Heart right ventricle (tissue), 16 donors: ENCODE measurements at regions of chr17 and their contacts with region 1.

Region 1: GRCh38 chr17:1908699-1909309 is 79.0 kb downstream of the RPA1 start:
- DNase-seq: peak in 1 of 2 donors; percentile 76
- ATAC-seq: peak; percentile 61 to 89 (median 86)
- H3K4me3 ChIP-seq: peak overlapping the region in 8 of 10 donors; percentile 14 to 48 (median 33)
- H3K27ac ChIP-seq: no peak overlapping the region
- H3K4me1 ChIP-seq: peaks cover 3 to 29% (median 13%) of the 10 kb centered on the region in 9 donors
- H3K27me3 ChIP-seq: peaks cover 10 to 82% (median 49%) of the 10 kb centered on the region in 7 donors
- CTCF ChIP-seq: peak; percentile 48 to 89 (median 73)

Region 2: DNA sequence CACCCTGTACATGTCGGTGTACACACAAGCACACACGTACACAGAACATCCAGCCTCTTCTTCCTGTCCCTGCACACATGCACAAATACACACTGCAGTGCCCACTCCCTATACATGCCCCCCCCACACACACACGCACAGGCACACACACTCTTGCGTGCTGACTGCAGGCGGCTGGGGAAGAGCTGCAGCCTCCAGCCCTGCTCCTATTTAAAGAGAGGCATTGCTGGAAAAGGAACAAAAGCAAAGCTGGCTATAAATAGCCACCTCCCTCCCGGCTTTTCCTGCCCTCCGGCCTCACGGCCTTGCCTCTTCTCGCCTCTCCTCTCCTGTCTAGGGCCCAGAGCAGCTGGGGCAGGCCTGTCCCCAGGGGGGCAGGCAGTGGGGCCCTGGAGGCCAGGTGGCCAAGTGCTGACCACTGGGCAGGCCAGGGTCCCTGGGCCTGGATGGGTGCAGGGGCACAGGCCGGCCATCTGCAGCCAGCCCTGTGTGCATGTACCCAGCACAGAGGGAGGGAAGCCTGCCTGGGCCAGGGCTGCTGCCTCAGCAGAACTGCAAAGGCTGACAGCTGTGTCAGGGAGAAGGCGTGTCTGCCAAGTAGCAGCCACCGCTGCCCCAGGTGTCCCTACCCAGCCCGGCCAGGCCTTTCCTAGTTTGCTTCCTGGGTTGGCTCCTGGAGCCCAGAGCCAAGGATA is 90.9 kb after region 1 on chr17:
- intact Hi-C with region 1: no loop called
- DNase-seq: peak; percentile 62 to 72
- ATAC-seq: peak; percentile 68 to 92 (median 87)
- H3K4me3 ChIP-seq: peak overlapping the region in 1 of 10 donors; percentile 15
- H3K27ac ChIP-seq: peak overlapping the region; percentile 70 to 95 (median 86)
- H3K4me1 ChIP-seq: peaks cover 15 to 55% (median 37%) of the 10 kb centered on the region in 9 donors
- H3K27me3 ChIP-seq: peaks cover 0 to 28% (median 0%) of the 10 kb centered on the region in 7 donors
- CTCF ChIP-seq: no peak

Region 3: GRCh38 chr17:2011411-2012371 is 102.9 kb after region 1 on chr17:
- intact Hi-C with region 1: no loop called
- DNase-seq: no peak
- ATAC-seq: peak; percentile 15 to 53 (median 42)
- H3K4me3 ChIP-seq: peak overlapping the region in 1 of 10 donors; percentile 0
- H3K27ac ChIP-seq: peak overlapping the region in 7 of 10 donors; percentile 3 to 53 (median 26)
- H3K4me1 ChIP-seq: peaks cover 0 to 31% (median 12%) of the 10 kb centered on the region in 9 donors
- H3K27me3 ChIP-seq: no peaks in the 10 kb centered on the region
- CTCF ChIP-seq: no peak

Region 4: DNA sequence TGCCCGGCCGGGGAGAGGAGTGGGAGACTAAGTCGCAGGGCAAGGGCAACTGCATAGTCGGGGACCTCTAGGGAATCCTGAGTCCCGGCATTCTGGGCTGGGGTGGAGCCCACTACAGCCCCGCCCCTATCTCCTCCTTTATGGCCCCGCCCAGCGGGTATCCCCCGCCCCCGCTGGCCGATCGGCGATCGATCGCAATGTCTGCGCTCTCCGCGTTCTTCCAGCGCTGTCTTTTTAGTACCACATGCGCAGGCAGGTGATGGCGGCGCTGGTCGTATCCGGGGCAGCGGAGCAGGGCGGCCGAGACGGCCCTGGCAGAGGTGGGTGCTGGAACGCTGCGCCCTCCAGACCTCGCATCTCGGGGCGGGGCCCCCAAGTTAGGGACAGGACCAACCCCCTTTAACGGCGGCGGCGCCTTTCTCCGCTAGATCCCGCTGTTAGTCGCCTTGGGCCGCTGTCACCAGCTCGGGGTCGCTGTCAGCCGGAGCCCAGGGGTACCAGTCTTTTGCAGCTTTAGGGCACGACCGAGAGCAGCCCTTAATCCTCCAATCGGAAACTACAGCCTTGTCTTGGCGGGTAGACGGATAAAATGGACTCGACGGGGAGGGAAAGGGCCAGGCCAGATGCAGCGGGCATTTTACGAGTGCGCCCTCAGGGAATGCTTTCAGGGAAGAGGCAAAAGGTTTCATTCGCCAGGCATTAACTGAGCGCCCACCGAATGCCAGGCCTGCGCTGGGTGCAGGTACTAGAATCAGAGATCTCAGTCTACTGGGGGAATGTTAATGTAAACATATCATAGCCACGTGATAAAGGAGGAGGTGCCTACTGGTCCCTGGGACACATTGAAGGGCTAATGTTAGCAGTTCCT is 121.3 kb after region 1 on chr17 and contains the start of gene DPH1:
- intact Hi-C with region 1: loop called (anchors 1 to 5 kb)
- DNase-seq: peak; percentile 90
- ATAC-seq: peak; percentile 84 to 95 (median 89)
- H3K4me3 ChIP-seq: peak within 1 kb of the TSS; percentile 74 to 99 (median 95)
- H3K27ac ChIP-seq: peak within 1 kb of the TSS in 9 of 10 donors; percentile 23 to 84 (median 72)
- H3K4me1 ChIP-seq: peaks cover 10 to 43% (median 29%) of the 10 kb centered on the region in 9 donors
- H3K27me3 ChIP-seq: peaks cover 0 to 46% (median 19%) of the 10 kb centered on the region in 7 donors
- CTCF ChIP-seq: no peak
- total RNA-seq, gene DPH1: 22.8 to 40.0 (median 25.9) TPM

Region 5: DNA sequence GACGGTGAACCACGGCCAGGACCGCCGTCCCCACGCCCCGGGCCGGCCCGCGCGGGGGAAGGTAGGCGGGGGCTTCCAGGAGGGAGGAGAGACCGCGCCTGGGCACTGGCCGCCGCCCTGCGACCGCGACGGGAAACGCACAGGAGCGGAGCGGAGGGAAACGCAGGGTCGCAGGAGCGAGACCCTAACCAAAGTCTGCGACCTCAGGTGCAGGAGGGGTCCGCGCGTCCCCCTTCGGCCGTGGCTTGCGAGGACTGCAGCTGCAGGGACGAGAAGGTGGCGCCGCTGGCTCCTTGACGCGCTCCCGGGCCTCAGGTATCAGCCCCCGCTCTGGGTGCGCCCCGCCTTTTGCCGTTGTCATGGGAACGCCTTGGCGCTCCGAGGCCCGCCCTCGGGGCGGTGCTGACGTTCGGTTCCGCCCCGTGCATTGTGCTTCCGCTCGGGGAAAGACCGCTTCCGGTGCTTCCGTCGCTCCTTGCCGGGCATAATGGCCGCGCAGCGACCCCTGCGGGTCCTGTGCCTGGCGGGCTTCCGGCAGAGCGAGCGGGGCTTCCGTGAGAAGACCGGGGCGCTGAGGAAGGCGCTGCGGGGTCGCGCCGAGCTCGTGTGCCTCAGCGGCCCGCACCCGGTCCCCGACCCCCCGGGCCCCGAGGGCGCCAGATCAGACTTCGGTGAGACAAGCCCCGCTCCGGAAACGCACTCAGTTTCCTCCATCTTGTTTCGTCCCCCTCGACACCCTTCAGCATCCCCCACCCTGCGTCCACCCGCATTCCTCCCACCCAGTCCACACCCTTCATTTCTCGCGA is 133.0 kb after region 1 on chr17 and contains the start of gene OVCA2:
- intact Hi-C with region 1: loop called in 2 of 10 experiments (anchors 5 kb)
- DNase-seq: peak; percentile 94
- ATAC-seq: peak; percentile 93 to 97 (median 95)
- H3K4me3 ChIP-seq: peak within 1 kb of the TSS; percentile 53 to 97 (median 80)
- H3K27ac ChIP-seq: peak within 1 kb of the TSS; percentile 72 to 98 (median 93)
- H3K4me1 ChIP-seq: peaks cover 8 to 41% (median 26%) of the 10 kb centered on the region in 9 donors
- H3K27me3 ChIP-seq: no peaks in the 10 kb centered on the region
- CTCF ChIP-seq: peak; percentile 15 to 80 (median 64)
- total RNA-seq, gene OVCA2: 15.3 to 25.4 (median 17.6) TPM

Region 6: GRCh38 chr17:2282297-2282873 is 373.6 kb after region 1 on chr17:
- intact Hi-C with region 1: loop called in 4 of 10 experiments (anchors 5 to 10 kb)
- DNase-seq: no peak
- ATAC-seq: peak in 7 of 8 donors; percentile 29 to 86 (median 48)
- H3K4me3 ChIP-seq: no peak overlapping the region
- H3K27ac ChIP-seq: peak overlapping the region in 1 of 10 donors; percentile 43
- H3K4me1 ChIP-seq: peaks cover 0 to 13% (median 0%) of the 10 kb centered on the region in 9 donors
- H3K27me3 ChIP-seq: no peaks in the 10 kb centered on the region
- CTCF ChIP-seq: peak; percentile 47 to 70 (median 63)